Naive thymus-derived CD4-positive, alpha-beta T cell (primary cell): ENCODE measurements at regions of chr7 and their contacts with region 1.

Region 1: GRCh38 chr7:26200444-26201246 is at the start of gene HNRNPA2B1:
- DNase-seq: peak; percentile 97 to 100 (median 99)
- ATAC-seq: peak; percentile 84
- H3K4me3 ChIP-seq: peak within 1 kb of the TSS; percentile 99
- H3K4me3 Mint-ChIP-seq: peak within 1 kb of the TSS; percentile 94 to 100 (median 100)
- H3K27ac ChIP-seq: peak within 1 kb of the TSS; percentile 97
- H3K27ac Mint-ChIP-seq: peak within 1 kb of the TSS; percentile 98 to 100 (median 100)
- H3K4me1 ChIP-seq: peaks cover 27 to 35% of the 10 kb centered on the region in 2 donors
- H3K4me1 Mint-ChIP-seq: peaks cover 37 to 60% (median 53%) of the 10 kb centered on the region in 7 donors
- H3K27me3 ChIP-seq: no peaks in the 10 kb centered on the region
- H3K27me3 Mint-ChIP-seq: peaks cover 0 to 9% (median 0%) of the 10 kb centered on the region in 5 donors
- total RNA-seq, gene HNRNPA2B1: 394 to 702 (median 437) TPM

Region 2: DNA sequence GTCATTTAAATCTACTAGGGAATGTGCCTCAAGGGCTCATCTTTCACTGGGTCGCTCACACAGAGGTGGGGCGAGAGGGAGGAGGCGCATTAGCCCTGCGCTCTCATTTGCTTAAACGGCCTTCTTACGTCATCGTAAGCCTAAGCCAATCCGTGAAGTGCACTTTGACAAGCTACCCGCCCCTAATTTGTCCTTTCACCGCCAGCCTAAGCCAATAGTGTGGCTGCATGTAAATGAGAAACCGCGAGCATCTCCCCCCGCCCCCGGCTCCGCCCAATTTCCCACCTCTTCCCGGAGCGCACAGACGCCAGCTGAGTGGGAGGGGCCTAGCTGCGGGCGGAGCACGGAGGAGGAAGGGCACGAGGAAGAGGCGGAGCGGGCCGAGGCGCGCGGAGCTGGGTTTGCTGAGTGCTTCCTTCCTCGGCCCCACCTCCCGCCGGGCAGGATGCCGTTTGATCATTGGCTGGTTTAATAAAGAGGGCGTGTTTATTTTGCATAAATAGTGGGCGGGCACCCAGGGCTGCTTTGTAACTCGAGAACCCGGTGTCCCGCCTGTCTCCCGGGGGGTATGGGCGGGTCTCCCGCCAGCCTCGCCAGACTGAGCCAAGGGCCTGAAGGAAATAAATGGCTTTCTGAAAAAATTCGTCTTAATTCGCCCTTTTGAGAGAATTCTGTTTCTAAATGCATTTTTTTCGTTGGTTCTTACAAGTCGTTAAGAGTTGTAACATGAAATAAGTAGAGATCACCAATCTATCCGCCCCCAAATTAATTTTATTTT is 338.2 kb before region 1 on chr7:
- CTCF ChIA-PET with region 1: no interaction called
- POLR2A ChIA-PET with region 1: no interaction called
- intact Hi-C with region 1: loop called in 1 of 2 experiments (anchors 1 kb)
- DNase-seq: peak; percentile 32 to 95 (median 49)
- ATAC-seq: peak; percentile 93
- H3K4me3 ChIP-seq: peak overlapping the region; percentile 4
- H3K4me3 Mint-ChIP-seq: peak overlapping the region in 8 of 10 donors; percentile 38 to 87 (median 61)
- H3K27ac ChIP-seq: no peak overlapping the region
- H3K27ac Mint-ChIP-seq: peak overlapping the region in 8 of 9 donors; percentile 14 to 88 (median 84)
- H3K4me1 ChIP-seq: peaks cover 0 to 6% of the 10 kb centered on the region in 2 donors
- H3K4me1 Mint-ChIP-seq: peaks cover 8 to 46% (median 20%) of the 10 kb centered on the region in 7 donors
- H3K27me3 ChIP-seq: peaks cover 35 to 87% of the 10 kb centered on the region in 2 donors
- H3K27me3 Mint-ChIP-seq: peaks cover 23 to 82% (median 62%) of the 10 kb centered on the region in 5 donors

Region 3: DNA sequence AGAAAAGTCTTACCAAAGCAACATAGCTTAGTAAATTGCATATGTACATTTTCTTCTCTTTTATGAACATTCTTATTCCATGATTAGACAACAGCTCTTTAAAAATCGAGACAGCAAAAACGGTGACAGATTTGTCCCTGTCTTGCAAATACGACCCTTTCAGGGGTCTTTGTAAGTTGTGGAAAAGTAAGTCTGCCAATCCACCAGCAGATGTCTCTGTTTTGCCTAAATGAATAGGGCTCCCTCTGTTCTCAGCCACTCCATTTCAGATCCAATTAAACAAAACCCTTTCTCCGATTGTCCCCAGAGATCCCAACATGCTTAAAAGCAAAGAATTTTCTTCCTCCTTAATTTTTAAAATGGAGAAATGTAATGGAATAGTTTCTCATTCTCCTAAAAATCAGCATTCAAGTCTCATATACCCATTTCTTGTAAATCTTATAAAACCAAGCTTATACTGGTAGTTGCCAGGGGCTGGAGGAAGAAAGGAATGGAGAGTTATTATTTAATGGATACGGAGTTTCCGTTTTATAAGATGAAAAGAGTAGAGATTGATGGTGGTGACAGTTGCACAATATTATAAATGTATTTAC is 109.6 kb before region 1 on chr7:
- CTCF ChIA-PET with region 1: interaction called, 177 read pairs
- POLR2A ChIA-PET with region 1: interaction called, 236 read pairs
- intact Hi-C with region 1: loop called (anchors 1 kb)
- DNase-seq: peak in 7 of 9 donors; percentile 19 to 63 (median 53)
- ATAC-seq: peak; percentile 64
- H3K4me3 ChIP-seq: no peak overlapping the region
- H3K4me3 Mint-ChIP-seq: peak overlapping the region in 9 of 10 donors; percentile 4 to 50 (median 30)
- H3K27ac ChIP-seq: no peak overlapping the region
- H3K27ac Mint-ChIP-seq: peak overlapping the region in 6 of 9 donors; percentile 1 to 68 (median 2)
- H3K4me1 ChIP-seq: peaks cover 0 to 20% of the 10 kb centered on the region in 2 donors
- H3K4me1 Mint-ChIP-seq: peaks cover 11 to 54% (median 22%) of the 10 kb centered on the region in 7 donors
- H3K27me3 ChIP-seq: no peaks in the 10 kb centered on the region
- H3K27me3 Mint-ChIP-seq: no peaks in the 10 kb centered on the region

Region 4: DNA sequence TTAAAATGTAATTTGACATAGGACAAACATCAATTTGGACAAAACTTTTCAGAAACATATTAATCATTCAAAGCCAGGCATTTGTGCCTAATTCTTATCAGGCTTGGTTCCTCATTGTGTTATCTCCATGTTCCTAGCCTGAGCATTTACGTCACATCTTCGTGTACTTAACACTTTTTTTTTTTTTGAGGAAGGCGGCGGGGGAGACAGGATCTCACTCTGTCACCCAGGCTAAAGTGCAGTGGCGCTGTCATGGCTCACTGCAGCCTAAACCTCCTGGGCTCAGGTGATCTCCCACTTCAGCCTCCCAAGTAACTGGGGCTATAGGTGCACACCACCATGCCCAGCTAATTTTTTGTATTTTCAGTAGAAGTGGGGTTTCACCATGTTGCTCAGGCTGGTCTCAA is 19.9 kb before region 1 on chr7:
- CTCF ChIA-PET with region 1: interaction called, 6 read pairs
- POLR2A ChIA-PET with region 1: interaction called, 289 read pairs
- intact Hi-C with region 1: loop called in 1 of 2 experiments (anchors 2 kb)
- DNase-seq: no peak
- ATAC-seq: no peak
- H3K4me3 ChIP-seq: no peak overlapping the region
- H3K4me3 Mint-ChIP-seq: no peak overlapping the region
- H3K27ac ChIP-seq: peak overlapping the region; percentile 20
- H3K27ac Mint-ChIP-seq: peak overlapping the region in 6 of 9 donors; percentile 3 to 83 (median 77)
- H3K4me1 ChIP-seq: peaks cover 0 to 4% of the 10 kb centered on the region in 2 donors
- H3K4me1 Mint-ChIP-seq: peaks cover 22 to 69% (median 58%) of the 10 kb centered on the region in 7 donors
- H3K27me3 ChIP-seq: no peaks in the 10 kb centered on the region
- H3K27me3 Mint-ChIP-seq: no peaks in the 10 kb centered on the region

Region 5: DNA sequence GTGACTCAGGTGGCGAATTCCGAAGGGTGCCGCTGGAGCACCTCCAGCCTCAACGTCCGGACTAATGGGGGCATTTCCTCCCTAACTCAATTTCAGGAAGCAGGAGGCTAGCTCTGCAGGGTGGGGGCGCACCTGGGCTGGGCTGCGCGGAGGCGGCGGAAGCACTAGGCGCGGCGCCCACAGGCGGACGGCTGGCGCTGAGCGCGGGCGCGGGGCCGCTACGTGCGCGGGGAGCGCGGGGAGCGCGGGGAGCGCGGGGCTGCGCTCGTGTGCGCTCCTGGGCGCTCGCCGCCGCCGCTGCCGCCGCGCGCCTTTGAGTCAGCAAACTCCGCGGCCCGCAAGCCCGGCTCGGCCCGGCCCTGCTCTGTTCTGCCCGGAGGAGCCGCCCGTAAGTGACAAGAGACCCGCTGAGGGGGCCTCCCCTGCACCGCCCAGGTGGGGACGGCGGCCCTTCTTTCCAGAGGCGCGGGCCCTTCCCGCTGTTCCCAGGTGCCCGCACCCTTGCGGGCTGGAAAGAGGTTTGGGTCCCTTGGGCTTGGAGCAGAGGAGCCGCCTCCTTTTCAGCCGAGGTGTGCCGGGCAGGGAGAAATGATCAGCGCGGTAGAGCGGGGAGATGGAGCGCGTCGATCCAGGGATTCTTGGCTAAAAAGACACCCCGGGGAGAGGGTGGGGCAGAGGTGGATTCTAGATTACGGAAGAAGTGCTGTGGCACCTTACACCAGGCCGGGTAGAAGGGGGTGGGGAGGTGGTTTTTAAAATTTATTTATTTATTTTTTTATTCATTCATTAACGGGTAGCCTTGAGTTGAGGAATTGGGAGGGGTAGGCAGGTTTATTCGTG is 91.3 kb after region 1 on chr7 and contains the start of gene SNX10:
- CTCF ChIA-PET with region 1: interaction called, 4 read pairs
- POLR2A ChIA-PET with region 1: interaction called, 28 read pairs
- intact Hi-C with region 1: loop called (anchors 1 kb)
- DNase-seq: peak; percentile 52 to 74 (median 72)
- ATAC-seq: peak; percentile 90
- H3K4me3 ChIP-seq: peak within 1 kb of the TSS; percentile 88
- H3K4me3 Mint-ChIP-seq: peak within 1 kb of the TSS; percentile 78 to 94 (median 91)
- H3K27ac ChIP-seq: peak within 1 kb of the TSS; percentile 58
- H3K27ac Mint-ChIP-seq: peak within 1 kb of the TSS; percentile 45 to 91 (median 82)
- H3K4me1 ChIP-seq: peaks cover 25 to 30% of the 10 kb centered on the region in 2 donors
- H3K4me1 Mint-ChIP-seq: peaks cover 22 to 41% (median 35%) of the 10 kb centered on the region in 7 donors
- H3K27me3 ChIP-seq: no peaks in the 10 kb centered on the region
- H3K27me3 Mint-ChIP-seq: peaks cover 0 to 13% (median 0%) of the 10 kb centered on the region in 5 donors
- total RNA-seq, gene SNX10: 5.0 to 37.0 (median 6.3) TPM

Region 6: DNA sequence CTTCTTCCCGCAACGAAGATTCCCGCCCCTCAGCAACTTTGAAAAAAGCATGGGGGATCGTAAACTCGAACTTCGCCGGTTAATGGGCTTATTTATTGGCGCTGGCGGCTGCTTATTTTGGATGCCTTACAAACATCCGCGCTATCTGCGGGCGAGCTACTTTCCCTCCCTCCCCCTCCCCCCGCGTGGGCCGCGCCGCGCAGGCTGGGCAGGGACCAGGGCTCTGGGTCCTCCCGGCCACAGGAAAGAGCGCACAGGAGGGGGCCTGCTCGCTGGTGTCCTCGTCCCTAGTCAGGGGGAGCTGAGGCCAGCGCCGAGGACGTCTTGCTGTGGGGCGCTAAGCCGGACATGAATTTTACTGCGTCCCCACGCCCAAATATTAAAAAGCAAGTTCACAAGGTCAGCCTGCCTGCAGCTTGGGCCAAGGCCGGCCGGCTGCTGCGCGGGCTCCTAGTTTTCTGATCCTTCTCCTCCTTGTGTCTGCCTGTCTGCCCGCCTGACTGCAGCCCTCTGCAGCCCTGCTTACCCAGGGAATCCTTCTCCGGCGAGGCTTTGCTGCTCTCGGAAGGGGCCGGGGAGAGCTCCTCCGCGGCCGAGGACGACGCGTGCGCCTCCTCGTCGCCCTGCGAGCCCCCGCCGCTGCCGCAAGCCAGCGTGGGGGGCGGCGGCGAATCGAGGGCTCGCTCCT is 972.3 kb after region 1 on chr7:
- CTCF ChIA-PET with region 1: no interaction called
- POLR2A ChIA-PET with region 1: no interaction called
- intact Hi-C with region 1: loop called in 1 of 2 experiments (anchors 5 kb)
- DNase-seq: peak in 2 of 9 donors; percentile 23 to 40
- ATAC-seq: peak; percentile 15
- H3K4me3 ChIP-seq: peak overlapping the region; percentile 36
- H3K4me3 Mint-ChIP-seq: peak overlapping the region in 9 of 10 donors; percentile 23 to 79 (median 69)
- H3K27ac ChIP-seq: no peak overlapping the region
- H3K27ac Mint-ChIP-seq: peak overlapping the region in 1 of 9 donors; percentile 86
- H3K4me1 ChIP-seq: peaks cover 16 to 25% of the 10 kb centered on the region in 2 donors
- H3K4me1 Mint-ChIP-seq: peaks cover 14 to 43% (median 23%) of the 10 kb centered on the region in 7 donors
- H3K27me3 ChIP-seq: peaks cover 32 to 65% of the 10 kb centered on the region in 2 donors
- H3K27me3 Mint-ChIP-seq: peaks cover 59 to 69% (median 67%) of the 10 kb centered on the region in 5 donors